AG04450 (cell line): ENCODE measurements at regions of chr11 and their contacts with region 1.

Region 1: DNA sequence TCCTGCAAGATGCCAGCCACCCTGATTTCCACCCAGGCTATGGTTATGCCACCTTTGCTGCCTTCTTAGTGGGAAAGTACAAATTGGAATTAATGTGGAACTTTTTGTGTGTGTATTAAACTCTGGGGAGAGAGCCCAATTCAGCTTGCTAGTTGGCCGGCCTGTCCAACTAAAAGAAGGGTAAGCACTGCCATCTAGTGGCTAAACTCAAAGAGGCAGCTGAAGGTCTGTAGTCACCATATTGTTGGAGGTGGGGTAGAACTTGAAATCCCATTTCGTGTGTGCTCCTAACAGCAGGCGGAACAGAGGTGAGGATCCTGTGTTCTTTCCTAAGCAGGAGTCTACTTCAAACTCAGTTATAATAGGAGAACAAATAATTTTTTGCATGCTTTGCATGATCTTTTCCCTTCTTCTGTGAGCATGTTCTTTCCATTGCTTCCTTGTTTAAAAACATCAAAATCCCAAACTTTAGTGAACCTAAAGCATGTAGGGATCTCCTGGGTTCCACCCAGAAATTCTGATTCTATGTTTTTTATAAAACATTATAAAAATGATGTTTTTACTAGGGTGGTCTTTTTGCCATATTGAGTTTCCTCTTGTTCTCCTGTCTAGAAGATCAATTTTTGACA is 138.8 kb upstream of the SORL1-AS1 start:
- DNase-seq: peak; percentile 63
- H3K4me3 ChIP-seq: no peak overlapping the region
- H3K27ac ChIP-seq: no peak overlapping the region
- H3K27me3 ChIP-seq: no peaks in the 10 kb centered on the region
- CTCF ChIP-seq: peak; percentile 89

Region 2: GRCh38 chr11:121250843-121251242 is 340.7 kb before region 1 on chr11:
- CTCF ChIA-PET with region 1: interaction called, 15 read pairs
- POLR2A ChIA-PET with region 1: no interaction called
- DNase-seq: no peak
- H3K4me3 ChIP-seq: no peak overlapping the region
- H3K27ac ChIP-seq: no peak overlapping the region
- H3K27me3 ChIP-seq: peaks cover 5% of the 10 kb centered on the region
- CTCF ChIP-seq: no peak

Region 3: DNA sequence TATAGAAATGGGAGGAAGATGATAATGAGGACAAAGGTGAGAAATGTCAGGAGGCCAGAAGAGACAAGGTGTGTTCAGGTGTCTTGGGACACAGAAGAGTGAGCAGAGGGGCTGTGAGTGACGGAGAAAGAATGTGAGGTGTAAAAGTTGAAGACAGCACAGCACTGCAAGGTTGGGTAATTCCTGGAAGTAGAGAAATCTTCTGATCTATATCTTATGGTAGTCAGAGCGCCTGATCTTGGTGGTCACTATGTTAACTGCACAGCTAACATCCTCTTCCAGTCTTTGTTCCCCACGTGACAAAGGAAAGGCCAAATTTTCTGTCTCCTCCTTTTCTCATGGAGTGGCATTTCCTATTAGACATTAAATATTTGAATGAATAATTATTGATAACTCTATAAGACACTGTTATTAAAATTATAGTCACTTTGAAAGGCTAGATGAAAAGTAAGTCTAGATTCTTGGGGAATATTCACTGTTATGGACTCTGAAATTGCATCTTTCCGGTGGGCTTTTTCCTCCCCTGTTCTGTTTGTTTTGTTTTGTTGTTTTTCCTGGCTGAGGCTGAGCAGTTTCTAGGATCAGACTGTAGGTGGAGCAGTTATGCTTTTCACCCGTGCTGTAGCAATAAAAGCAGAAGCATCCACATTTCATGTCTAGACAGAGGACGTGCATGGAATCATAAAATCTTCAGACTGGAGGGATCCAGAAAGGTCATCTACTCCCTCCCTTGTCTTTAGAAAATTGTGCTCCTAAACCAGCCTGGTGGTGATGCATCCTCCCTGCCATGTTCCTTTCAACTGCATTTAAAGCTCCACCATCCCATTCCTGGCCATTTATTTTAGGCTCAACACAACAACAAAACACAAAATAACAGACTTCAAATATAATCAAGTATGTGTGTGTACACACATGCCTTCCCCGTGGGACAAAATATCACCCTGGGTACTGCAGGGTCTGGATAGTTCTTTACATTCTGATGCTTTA is 272.4 kb before region 1 on chr11:
- CTCF ChIA-PET with region 1: interaction called, 12 read pairs
- POLR2A ChIA-PET with region 1: no interaction called
- DNase-seq: peak; percentile 8
- H3K4me3 ChIP-seq: no peak overlapping the region
- H3K27ac ChIP-seq: no peak overlapping the region
- H3K27me3 ChIP-seq: peaks cover 10% of the 10 kb centered on the region
- CTCF ChIP-seq: peak; percentile 83

Region 4: DNA sequence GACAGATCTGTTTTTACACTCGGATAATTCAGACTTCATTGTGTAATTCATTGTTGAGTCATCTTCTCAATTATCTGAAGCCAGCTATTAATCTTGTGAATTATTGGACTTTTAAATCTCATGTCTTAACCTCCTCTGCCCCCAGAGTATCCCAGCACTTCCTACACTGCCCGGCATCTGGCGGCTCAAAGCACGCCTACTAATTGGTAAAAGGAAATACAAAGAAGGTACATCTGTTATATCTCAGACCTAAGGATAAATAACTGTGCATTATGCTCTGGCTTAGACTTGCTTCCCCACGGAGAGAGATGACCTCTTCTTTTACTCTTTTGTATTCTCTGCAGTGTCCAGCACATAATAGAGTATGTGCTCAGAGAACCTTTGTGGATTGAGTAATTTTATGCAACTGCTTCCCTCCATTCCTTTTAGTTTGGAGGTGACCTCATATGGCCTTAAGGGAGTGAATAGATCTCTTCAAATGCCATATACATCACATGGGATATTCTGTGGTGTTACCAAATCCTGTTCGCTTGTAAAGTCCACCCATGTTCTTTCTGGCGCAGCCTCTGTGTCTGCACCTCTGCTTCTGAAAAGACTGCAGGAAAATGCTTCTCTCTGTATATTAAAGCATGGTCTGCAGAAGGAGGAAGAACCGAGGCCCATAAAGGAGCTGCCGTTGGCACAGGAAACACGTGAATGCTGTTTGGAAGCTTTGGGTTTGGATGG is 13.1 kb before region 1 on chr11:
- CTCF ChIA-PET with region 1: interaction called, 10 read pairs
- POLR2A ChIA-PET with region 1: no interaction called
- DNase-seq: no peak
- H3K4me3 ChIP-seq: no peak overlapping the region
- H3K27ac ChIP-seq: no peak overlapping the region
- H3K27me3 ChIP-seq: peaks cover 3% of the 10 kb centered on the region
- CTCF ChIP-seq: no peak

Region 5: GRCh38 chr11:122038543-122038942 is 447.0 kb after region 1 on chr11:
- CTCF ChIA-PET with region 1: no interaction called
- POLR2A ChIA-PET with region 1: no interaction called
- DNase-seq: peak; percentile 72
- H3K4me3 ChIP-seq: no peak overlapping the region
- H3K27ac ChIP-seq: no peak overlapping the region
- H3K27me3 ChIP-seq: no peaks in the 10 kb centered on the region
- CTCF ChIP-seq: no peak